CD14-positive monocyte (primary cell): ENCODE measurements at regions of chr4 and their contacts with region 1.

Region 1: GRCh38 chr4:40856822-40857362 is 107.1 kb downstream of the NSUN7 start:
- DNase-seq: peak; percentile 16 to 55 (median 47)
- H3K4me3 ChIP-seq: peak overlapping the region; percentile 40 to 74 (median 49)
- H3K4me3 Mint-ChIP-seq: peak overlapping the region; percentile 78 to 88
- H3K27ac ChIP-seq: no peak overlapping the region
- H3K27ac Mint-ChIP-seq: peak overlapping the region in 1 of 7 donors; percentile 25
- H3K4me1 ChIP-seq: peaks cover 26 to 29% of the 10 kb centered on the region in 2 donors
- H3K4me1 Mint-ChIP-seq: peaks cover 30% of the 10 kb centered on the region
- H3K27me3 ChIP-seq: no peaks in the 10 kb centered on the region
- H3K27me3 Mint-ChIP-seq: peaks cover 9 to 16% (median 12%) of the 10 kb centered on the region in 3 donors
- CTCF ChIP-seq: no peak

Region 2: DNA sequence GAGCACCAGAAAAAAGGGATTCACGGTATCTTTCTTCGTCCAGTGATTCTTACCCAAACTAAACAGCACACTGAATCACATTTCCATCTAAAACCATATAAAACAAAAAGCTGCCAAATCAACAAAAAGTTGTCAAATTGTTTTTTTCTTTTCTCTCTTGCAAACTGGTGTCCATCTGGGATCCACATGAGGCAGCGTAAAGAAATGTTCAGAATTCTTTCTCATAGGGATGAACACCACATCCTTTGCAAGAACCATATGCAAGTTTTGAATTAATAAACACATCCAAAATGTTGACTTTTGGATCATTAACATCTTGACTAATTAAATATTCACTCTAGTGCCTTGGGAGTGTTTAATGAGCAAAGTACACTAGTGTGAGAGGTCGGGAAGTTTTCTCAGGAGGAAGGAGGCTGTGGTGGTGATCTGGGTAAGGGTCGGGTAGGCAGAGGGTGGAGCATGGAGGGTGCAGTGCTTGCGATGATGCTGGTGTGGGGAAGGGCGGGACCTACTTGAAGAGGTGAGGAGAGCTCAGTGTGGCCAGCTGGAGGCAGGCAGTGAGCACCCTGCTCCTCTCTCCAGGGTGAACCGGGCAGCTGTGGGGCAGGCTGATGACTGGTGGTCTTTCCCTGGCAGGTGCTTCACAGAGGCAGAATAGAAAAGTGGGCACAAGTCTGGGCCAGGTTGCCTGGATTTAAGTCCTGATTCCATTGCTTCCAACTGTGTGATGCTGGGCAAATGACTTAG is 34.3 kb before region 1 on chr4:
- intact Hi-C with region 1: loop called in 1 of 2 experiments (anchors 5 kb)
- DNase-seq: no peak
- H3K4me3 ChIP-seq: no peak overlapping the region
- H3K4me3 Mint-ChIP-seq: no peak overlapping the region
- H3K27ac ChIP-seq: no peak overlapping the region
- H3K27ac Mint-ChIP-seq: peak overlapping the region in 1 of 7 donors; percentile 80
- H3K4me1 ChIP-seq: no peaks in the 10 kb centered on the region
- H3K4me1 Mint-ChIP-seq: no peaks in the 10 kb centered on the region
- H3K27me3 ChIP-seq: no peaks in the 10 kb centered on the region
- H3K27me3 Mint-ChIP-seq: peaks cover 0 to 3% (median 0%) of the 10 kb centered on the region in 3 donors
- CTCF ChIP-seq: no peak